Heart left ventricle (tissue), 16 donors: ENCODE measurements at regions of chr22 and their contacts with region 1.

Region 1: DNA sequence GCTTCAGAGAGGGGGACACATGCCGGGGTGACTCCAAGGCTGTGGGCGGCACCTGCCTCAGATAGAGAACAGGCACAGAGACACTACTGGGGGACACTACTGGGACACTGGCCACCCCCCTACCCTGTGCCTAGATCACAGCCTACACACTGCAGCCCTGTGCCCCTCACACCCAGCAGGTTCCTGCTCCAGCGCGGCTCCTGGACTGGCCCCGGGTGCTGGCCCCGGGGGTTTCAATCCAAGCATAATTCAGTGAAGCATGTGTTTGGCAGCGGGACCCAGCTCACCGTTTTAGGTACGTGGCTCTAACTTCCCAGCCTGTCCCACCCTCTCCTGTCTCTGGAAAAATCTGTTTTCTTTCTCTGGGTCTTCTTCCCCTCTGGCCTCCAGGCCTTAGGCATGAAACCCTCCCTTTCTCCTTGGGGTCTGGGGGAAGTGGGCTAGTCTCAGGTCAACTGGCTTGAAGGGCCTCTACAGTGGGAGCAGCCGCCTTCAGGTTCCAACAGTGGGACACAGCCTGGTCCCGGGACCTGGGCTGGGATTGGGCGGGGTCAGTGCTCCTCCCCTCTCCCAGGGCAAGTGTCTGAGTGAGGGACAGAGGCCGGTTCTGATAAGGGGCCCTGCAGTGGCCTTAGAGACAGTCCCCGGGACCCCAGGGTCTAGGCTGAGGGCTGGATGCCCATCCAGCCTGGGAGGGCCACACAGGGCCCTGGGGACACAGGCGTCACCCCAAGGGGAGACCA is 98.8 kb downstream of the CRYBB2 start:
- DNase-seq: no peak
- ATAC-seq: peak in 1 of 4 donors; percentile 29
- H3K4me3 ChIP-seq: no peak overlapping the region
- H3K27ac ChIP-seq: no peak overlapping the region
- H3K4me1 ChIP-seq: no peaks in the 10 kb centered on the region
- H3K27me3 ChIP-seq: no peaks in the 10 kb centered on the region
- CTCF ChIP-seq: no peak
- POLR2A ChIP-seq: no peak

Region 2: GRCh38 chr22:23574371-23574811 is 1743.9 kb before region 1 on chr22:
- intact Hi-C with region 1: loop called in 1 of 10 experiments (anchors 5 kb)
- DNase-seq: peak in 1 of 5 donors; percentile 35
- ATAC-seq: peak in 1 of 4 donors; percentile 24
- H3K4me3 ChIP-seq: no peak overlapping the region
- H3K27ac ChIP-seq: no peak overlapping the region
- H3K4me1 ChIP-seq: no peaks in the 10 kb centered on the region
- H3K27me3 ChIP-seq: no peaks in the 10 kb centered on the region
- CTCF ChIP-seq: no peak
- POLR2A ChIP-seq: no peak